ENCODE measurements at regions of chr6 and their contacts with region 1.

Region 1: GRCh38 chr6:75243333-75244062 is at the start of gene COX7A2:
- DNase-seq: peak; percentile 93
- H3K4me3 ChIP-seq: peak within 1 kb of the TSS; percentile 91
- CTCF ChIP-seq: no peak

Region 2: DNA sequence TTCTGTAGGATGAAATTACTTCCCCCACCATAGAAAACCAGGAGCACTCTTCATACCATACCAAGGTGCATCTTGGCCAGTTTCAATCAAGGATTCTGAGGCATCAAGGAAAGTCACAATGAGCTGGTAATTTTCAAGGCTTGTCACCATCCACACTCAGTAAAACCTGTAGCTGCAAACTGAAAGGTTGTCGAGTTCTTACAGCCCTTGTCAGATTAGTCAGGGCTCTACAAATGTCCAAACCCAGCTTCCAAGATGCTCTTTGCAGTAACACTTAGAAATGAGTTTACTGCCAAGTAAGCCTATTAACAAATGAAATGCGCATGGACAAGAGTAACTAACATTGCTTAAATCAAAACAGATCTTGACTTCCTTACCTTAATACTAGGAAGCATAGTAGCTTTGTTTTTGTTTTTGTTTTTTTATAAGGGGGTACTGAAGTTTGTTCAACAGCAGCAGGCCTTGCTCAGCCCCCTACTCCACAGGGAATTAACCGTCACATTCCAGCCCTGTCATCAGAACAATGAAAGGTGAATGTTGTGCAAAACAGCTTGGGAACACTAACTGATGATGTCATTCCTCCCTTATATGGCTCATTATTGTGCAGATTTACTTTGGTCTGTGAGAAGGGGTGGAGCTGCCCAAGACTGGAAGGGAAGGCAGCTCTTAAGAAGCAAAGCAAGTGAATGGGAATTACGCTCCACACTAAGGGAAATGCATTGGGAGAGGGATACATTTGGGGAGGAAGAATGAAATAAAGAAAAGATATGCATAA is 91.0 kb after region 1 on chr6:
- in situ Hi-C with region 1: loop called (anchors 5 kb)
- DNase-seq: peak; percentile 75
- H3K4me3 ChIP-seq: no peak overlapping the region
- CTCF ChIP-seq: no peak

Measured in astrocyte of the cerebellum (primary cell).